ENCODE measurements at regions of chr1 and their contacts with region 1.

Region 1: GRCh38 chr1:30700528-30701257 is 22.7 kb downstream of the MATN1 start:
- DNase-seq: no peak
- ATAC-seq: peak in 2 of 4 donors; percentile 18 to 54
- H3K4me3 ChIP-seq: no peak overlapping the region
- H3K27ac ChIP-seq: no peak overlapping the region
- H3K4me1 ChIP-seq: no peaks in the 10 kb centered on the region
- H3K27me3 ChIP-seq: no peaks in the 10 kb centered on the region
- CTCF ChIP-seq: no peak

Region 2: DNA sequence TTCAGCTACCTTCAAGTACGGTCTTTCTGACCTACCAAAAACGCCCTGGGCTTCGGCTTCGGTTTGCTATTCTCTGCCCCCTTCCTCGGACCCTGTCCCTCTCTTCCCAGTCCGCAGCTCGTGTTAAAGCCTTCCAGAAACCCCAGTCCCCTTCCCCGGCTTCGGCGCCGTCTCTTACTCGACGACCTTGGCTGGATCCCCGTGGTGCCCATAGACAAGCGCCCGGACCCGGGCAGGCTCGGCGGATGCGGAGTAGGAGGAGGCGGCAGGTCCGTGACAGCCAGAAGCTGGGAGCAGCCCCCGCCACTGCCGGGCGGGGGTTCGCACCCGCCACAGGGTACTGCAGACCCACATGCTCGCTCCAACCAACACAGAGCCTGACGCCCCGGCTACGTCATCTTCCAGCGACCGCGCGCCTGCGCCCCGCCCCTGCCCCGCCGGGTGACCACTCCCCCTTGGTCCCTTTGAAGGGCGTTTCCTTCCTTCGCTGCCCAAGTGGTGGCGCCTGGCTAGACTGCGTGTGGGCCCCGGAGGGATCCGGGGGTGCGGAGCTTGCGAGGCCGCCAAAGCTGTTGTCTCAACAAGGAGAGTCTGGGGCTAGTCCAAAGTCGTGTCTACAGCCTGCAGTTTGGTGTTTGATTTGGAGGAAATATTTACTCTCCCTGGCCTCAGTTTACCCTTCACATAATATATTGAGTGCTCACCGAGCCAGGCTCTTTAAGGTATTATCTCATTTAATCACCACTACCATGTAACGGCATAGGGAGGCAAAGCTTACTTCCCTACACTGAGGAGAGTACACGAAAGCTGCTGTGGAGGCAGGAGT is 1469.9 kb before region 1 on chr1 and contains the start of gene MECR:
- intact Hi-C with region 1: loop called in 1 of 3 experiments (anchors 5 kb)
- DNase-seq: peak; percentile 90 to 98 (median 94)
- ATAC-seq: peak; percentile 98 to 99 (median 99)
- H3K4me3 ChIP-seq: peak within 1 kb of the TSS; percentile 60 to 87 (median 74)
- H3K27ac ChIP-seq: peak within 1 kb of the TSS; percentile 17 to 60 (median 50)
- H3K4me1 ChIP-seq: peaks cover 0 to 8% (median 7%) of the 10 kb centered on the region in 3 donors
- H3K27me3 ChIP-seq: no peaks in the 10 kb centered on the region
- CTCF ChIP-seq: no peak
- total RNA-seq, gene MECR: 9.0 to 13.0 (median 9.8) TPM